Endothelial cell of umbilical vein (primary cell): ENCODE measurements at regions of chr12 and their contacts with region 1.

Region 1: GRCh38 chr12:59834659-59835474 is 239.0 kb downstream of the SLC16A7 start:
- DNase-seq: no peak
- H3K4me3 ChIP-seq: no peak overlapping the region
- H3K27ac ChIP-seq: no peak overlapping the region
- H3K4me1 ChIP-seq: peaks cover 12% of the 10 kb centered on the region
- H3K27me3 ChIP-seq: no peaks in the 10 kb centered on the region
- CTCF ChIP-seq: peak in 1 of 2 donors; percentile 25
- POLR2A ChIP-seq: no peak

Region 2: GRCh38 chr12:59005195-59005955 is 829.5 kb before region 1 on chr12:
- CTCF ChIA-PET with region 1: no interaction called
- POLR2A ChIA-PET with region 1: no interaction called
- dilution Hi-C with region 1: no loop called
- intact Hi-C with region 1: no loop called
- DNase-seq: no peak
- H3K4me3 ChIP-seq: no peak overlapping the region
- H3K27ac ChIP-seq: no peak overlapping the region
- H3K4me1 ChIP-seq: no peaks in the 10 kb centered on the region
- H3K27me3 ChIP-seq: no peaks in the 10 kb centered on the region
- CTCF ChIP-seq: no peak
- POLR2A ChIP-seq: no peak

Region 3: GRCh38 chr12:59077575-59078426 is 757.1 kb before region 1 on chr12:
- CTCF ChIA-PET with region 1: no interaction called
- POLR2A ChIA-PET with region 1: no interaction called
- dilution Hi-C with region 1: no loop called
- intact Hi-C with region 1: no loop called
- DNase-seq: peak; percentile 93
- H3K4me3 ChIP-seq: no peak overlapping the region
- H3K27ac ChIP-seq: peak overlapping the region; percentile 9
- H3K4me1 ChIP-seq: peaks cover 52% of the 10 kb centered on the region
- H3K27me3 ChIP-seq: no peaks in the 10 kb centered on the region
- CTCF ChIP-seq: no peak
- POLR2A ChIP-seq: no peak

Region 4: GRCh38 chr12:59403259-59403932 is 431.5 kb before region 1 on chr12:
- CTCF ChIA-PET with region 1: interaction called, 6 read pairs
- POLR2A ChIA-PET with region 1: no interaction called
- dilution Hi-C with region 1: no loop called
- intact Hi-C with region 1: loop called (anchors 10 kb)
- DNase-seq: peak; percentile 70
- H3K4me3 ChIP-seq: peak overlapping the region in 1 of 3 experiments; percentile 20
- H3K27ac ChIP-seq: no peak overlapping the region
- H3K4me1 ChIP-seq: peaks cover 6% of the 10 kb centered on the region
- H3K27me3 ChIP-seq: no peaks in the 10 kb centered on the region
- CTCF ChIP-seq: peak; percentile 74 to 79
- POLR2A ChIP-seq: no peak

Region 5: DNA sequence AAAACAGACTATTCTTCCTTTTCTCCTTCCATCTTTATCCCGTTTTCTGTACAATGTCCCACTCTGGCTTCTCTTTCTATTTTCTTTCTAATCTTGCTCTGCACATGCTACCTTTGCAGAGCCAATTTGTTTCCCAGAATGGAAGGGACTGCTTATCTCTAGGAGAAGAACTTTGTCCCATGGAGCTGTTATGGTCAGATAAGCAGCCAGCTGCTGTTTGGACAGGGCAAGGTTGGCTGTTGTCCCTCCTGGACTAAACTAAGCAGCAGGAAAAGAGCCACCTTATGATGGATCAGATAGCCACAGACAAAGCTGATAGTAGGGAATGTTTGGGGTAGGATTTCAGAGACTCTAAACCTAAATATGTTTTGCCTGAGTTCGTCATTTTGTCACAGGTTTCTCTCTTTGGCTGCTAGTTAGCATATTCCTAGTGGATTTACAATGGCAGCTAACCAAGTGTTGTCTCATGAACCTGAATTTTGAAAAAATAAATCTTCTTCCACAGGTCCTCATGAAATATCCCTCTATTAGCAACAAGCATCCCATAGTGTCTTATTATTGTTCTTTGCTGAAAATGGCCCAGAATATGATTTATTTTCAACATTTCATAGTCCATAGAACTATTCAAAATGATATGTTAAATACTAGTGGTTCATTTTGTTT is 23.8 kb after region 1 on chr12:
- CTCF ChIA-PET with region 1: no interaction called
- POLR2A ChIA-PET with region 1: no interaction called
- dilution Hi-C with region 1: no loop called
- intact Hi-C with region 1: no loop called
- DNase-seq: peak; percentile 57
- H3K4me3 ChIP-seq: no peak overlapping the region
- H3K27ac ChIP-seq: no peak overlapping the region
- H3K4me1 ChIP-seq: no peaks in the 10 kb centered on the region
- H3K27me3 ChIP-seq: no peaks in the 10 kb centered on the region
- CTCF ChIP-seq: no peak
- POLR2A ChIP-seq: no peak

Region 6: DNA sequence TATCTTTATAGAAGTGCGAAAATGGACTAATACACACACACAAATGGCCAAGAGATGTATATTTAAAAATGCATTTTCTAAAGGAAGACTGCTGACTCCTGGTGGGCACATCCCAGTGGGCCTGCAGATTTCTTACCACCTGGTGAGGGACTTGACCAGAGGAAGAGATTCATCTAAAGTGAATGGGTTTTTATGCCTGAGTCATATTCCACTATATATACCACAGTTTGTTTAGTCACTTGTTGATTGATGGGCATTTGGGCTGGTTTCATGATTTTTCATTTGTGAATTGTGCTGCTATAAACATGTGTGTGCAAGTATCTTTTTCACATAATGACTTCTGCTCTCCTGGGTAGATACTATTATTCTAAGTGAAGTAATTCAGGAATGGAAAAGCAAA is 38.3 kb after region 1 on chr12:
- CTCF ChIA-PET with region 1: no interaction called
- POLR2A ChIA-PET with region 1: no interaction called
- dilution Hi-C with region 1: no loop called
- intact Hi-C with region 1: no loop called
- DNase-seq: no peak
- H3K4me3 ChIP-seq: no peak overlapping the region
- H3K27ac ChIP-seq: no peak overlapping the region
- H3K4me1 ChIP-seq: no peaks in the 10 kb centered on the region
- H3K27me3 ChIP-seq: no peaks in the 10 kb centered on the region
- CTCF ChIP-seq: no peak
- POLR2A ChIP-seq: no peak

Region 7: GRCh38 chr12:59972941-59973340 is 138.1 kb after region 1 on chr12:
- CTCF ChIA-PET with region 1: no interaction called
- POLR2A ChIA-PET with region 1: no interaction called
- dilution Hi-C with region 1: no loop called
- intact Hi-C with region 1: loop called (anchors 1 kb)
- DNase-seq: peak; percentile 11
- H3K4me3 ChIP-seq: no peak overlapping the region
- H3K27ac ChIP-seq: peak overlapping the region; percentile 35
- H3K4me1 ChIP-seq: peaks cover 23% of the 10 kb centered on the region
- H3K27me3 ChIP-seq: no peaks in the 10 kb centered on the region
- CTCF ChIP-seq: no peak
- POLR2A ChIP-seq: no peak

Region 8: DNA sequence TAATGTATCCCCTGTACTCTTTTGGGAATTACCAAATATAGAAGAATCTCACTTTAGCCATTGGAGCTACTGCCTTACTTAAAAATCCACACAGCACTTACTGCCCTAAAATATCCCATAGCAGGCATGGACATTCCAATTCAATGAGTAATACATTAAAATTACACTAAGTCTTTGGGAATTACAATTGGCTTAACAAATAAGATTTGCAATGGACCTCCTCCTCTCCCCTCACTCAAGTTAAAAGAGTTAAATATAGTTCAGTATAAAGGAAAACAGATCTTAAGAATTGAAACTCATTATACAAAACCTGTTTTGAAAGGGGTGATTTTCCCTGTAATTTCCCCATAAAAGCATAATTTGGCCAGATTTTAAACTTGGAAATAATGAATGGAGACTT is 238.0 kb after region 1 on chr12:
- CTCF ChIA-PET with region 1: no interaction called
- POLR2A ChIA-PET with region 1: no interaction called
- dilution Hi-C with region 1: no loop called
- intact Hi-C with region 1: loop called (anchors 1 kb)
- DNase-seq: peak; percentile 25
- H3K4me3 ChIP-seq: no peak overlapping the region
- H3K27ac ChIP-seq: no peak overlapping the region
- H3K4me1 ChIP-seq: peaks cover 16% of the 10 kb centered on the region
- H3K27me3 ChIP-seq: no peaks in the 10 kb centered on the region
- CTCF ChIP-seq: no peak
- POLR2A ChIP-seq: no peak

Region 9: DNA sequence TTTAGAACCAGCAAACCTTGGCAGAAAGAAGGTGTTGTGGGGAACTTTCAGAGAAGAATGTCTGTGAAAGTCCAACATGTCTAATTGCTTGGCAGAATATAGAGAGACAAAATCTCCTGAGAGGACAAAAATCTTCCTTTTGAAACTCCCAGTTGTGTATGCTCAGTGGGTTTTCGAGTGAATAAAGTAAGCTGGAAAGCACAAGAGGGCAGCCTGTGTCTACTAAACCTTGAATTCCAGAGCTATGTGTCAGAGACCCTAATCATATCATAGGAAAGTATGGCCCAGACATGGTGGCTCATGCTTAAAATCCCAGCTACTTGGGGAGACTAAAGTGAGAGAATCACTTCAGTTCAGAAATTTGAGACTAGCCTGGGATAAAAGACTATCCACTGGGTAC is 422.2 kb after region 1 on chr12:
- CTCF ChIA-PET with region 1: interaction called, 3 read pairs
- POLR2A ChIA-PET with region 1: no interaction called
- dilution Hi-C with region 1: no loop called
- intact Hi-C with region 1: loop called (anchors 5 kb)
- DNase-seq: peak; percentile 82
- H3K4me3 ChIP-seq: no peak overlapping the region
- H3K27ac ChIP-seq: no peak overlapping the region
- H3K4me1 ChIP-seq: no peaks in the 10 kb centered on the region
- H3K27me3 ChIP-seq: no peaks in the 10 kb centered on the region
- CTCF ChIP-seq: peak; percentile 14 to 33
- POLR2A ChIP-seq: no peak

Region 10: DNA sequence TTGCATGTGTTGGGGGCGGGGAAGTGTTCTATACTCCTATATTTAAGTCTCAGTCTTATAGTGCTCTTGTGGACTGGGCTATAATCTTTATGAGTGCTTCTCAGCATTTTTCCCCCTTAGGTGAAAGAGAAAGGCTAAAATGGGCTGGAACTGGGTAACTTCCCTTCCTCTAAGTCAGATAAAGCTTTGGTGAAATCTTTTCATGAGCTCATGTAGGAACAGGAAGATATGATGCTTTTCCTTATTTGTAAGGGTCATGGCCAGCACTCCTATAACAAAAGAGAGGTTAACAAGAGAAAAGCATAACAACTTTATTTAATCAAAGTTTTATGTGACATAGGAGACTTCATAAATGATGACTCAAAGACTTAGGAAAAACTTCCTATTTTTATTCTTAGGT is 602.4 kb after region 1 on chr12:
- CTCF ChIA-PET with region 1: no interaction called
- POLR2A ChIA-PET with region 1: no interaction called
- dilution Hi-C with region 1: no loop called
- intact Hi-C with region 1: loop called (anchors 1 kb)
- DNase-seq: peak; percentile 89
- H3K4me3 ChIP-seq: no peak overlapping the region
- H3K27ac ChIP-seq: peak overlapping the region; percentile 84
- H3K4me1 ChIP-seq: peaks cover 11% of the 10 kb centered on the region
- H3K27me3 ChIP-seq: no peaks in the 10 kb centered on the region
- CTCF ChIP-seq: no peak
- POLR2A ChIP-seq: no peak